ENCODE measurements at regions of chr17 and their contacts with region 1.

Region 1: GRCh38 chr17:38799378-38800236 is at the start of gene PIP4K2B:
- DNase-seq: peak; percentile 96 to 98 (median 96)
- ATAC-seq: peak; percentile 93 to 97 (median 96)
- H3K4me3 ChIP-seq: peak within 1 kb of the TSS; percentile 65 to 98 (median 82)
- H3K27ac ChIP-seq: peak within 1 kb of the TSS; percentile 89 to 100 (median 99)
- H3K4me1 ChIP-seq: peaks cover 6 to 42% (median 27%) of the 10 kb centered on the region in 12 donors
- H3K27me3 ChIP-seq: no peaks in the 10 kb centered on the region
- CTCF ChIP-seq: no peak
- POLR2A ChIP-seq: peak in 1 of 2 donors; percentile 57
- total RNA-seq, gene PIP4K2B: 39.4 to 55.0 (median 48.5) TPM

Region 2: GRCh38 chr17:38704645-38705522 is 94.7 kb before region 1 on chr17 and contains the start of gene MLLT6:
- intact Hi-C with region 1: no loop called
- DNase-seq: peak; percentile 85 to 89 (median 88)
- ATAC-seq: peak; percentile 45 to 64 (median 52)
- H3K4me3 ChIP-seq: peak within 1 kb of the TSS; percentile 67 to 97 (median 87)
- H3K27ac ChIP-seq: peak within 1 kb of the TSS; percentile 89 to 99 (median 97)
- H3K4me1 ChIP-seq: peaks cover 4 to 56% (median 31%) of the 10 kb centered on the region in 12 donors
- H3K27me3 ChIP-seq: no peaks in the 10 kb centered on the region
- CTCF ChIP-seq: no peak
- POLR2A ChIP-seq: peak in 1 of 2 donors; percentile 39
- total RNA-seq, gene MLLT6: 43.6 to 91.3 (median 68.3) TPM

Region 3: DNA sequence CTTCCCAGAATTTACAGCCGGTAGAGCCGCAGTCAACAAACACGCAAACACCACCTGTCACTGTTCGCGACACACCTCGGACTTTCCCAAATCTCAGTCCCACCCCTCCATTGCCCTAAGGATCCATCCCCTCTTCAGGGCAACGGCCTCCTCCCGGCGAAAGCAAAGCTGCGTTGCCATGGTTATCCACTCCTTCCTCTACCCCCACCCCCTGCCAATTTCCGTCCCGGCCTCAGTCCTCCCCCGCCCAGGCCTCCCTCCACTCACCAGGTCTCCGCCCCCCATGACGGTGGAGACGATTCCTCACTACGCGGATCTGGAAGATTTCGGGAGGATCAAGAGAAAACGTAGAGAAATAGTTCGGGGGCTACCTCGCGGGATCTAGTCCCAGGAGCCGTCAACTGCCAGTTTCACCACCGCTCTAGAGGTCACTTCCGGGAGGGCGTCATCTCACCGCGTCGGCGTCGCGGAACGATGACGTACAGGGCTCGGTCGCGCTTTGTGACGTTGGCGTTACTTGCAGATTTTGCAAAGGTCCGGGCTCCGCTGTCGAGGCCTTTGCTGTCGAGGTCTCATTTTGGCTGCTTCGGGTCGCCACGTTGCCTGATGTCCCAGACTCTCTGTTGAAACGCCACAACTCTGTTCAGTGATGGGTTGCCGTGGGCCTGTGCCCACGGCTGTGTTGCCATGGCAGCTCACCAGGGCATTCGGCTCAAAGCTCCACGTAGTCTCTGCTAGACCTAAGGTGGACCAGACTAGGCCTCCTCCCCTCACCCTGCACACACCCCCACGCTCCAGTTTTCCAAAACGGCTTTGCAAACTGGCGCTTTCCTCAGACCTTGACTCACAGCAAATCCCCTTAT is 25.5 kb after region 1 on chr17 and contains the start of gene CWC25:
- intact Hi-C with region 1: loop called in 1 of 10 experiments (anchors 1 kb)
- DNase-seq: peak; percentile 90 to 96 (median 92)
- ATAC-seq: peak; percentile 89 to 95 (median 94)
- H3K4me3 ChIP-seq: peak within 1 kb of the TSS; percentile 58 to 90 (median 79)
- H3K27ac ChIP-seq: peak within 1 kb of the TSS; percentile 87 to 100 (median 97)
- H3K4me1 ChIP-seq: peaks cover 7 to 24% (median 14%) of the 10 kb centered on the region in 12 donors
- H3K27me3 ChIP-seq: no peaks in the 10 kb centered on the region
- CTCF ChIP-seq: no peak
- POLR2A ChIP-seq: peak; percentile 5 to 84
- total RNA-seq, gene CWC25: 6.7 to 11.1 (median 8.3) TPM

Measured in heart left ventricle (tissue), 16 donors.